ENCODE measurements at regions of chr11 and their contacts with region 1.

Region 1: GRCh38 chr11:68506908-68507307 is 46.4 kb downstream of the PPP6R3 start:
- DNase-seq: no peak
- ATAC-seq: no peak
- H3K4me3 Mint-ChIP-seq: no peak overlapping the region
- H3K27ac Mint-ChIP-seq: no peak overlapping the region
- H3K4me1 Mint-ChIP-seq: peaks cover 84% of the 10 kb centered on the region
- H3K27me3 Mint-ChIP-seq: no peaks in the 10 kb centered on the region
- CTCF ChIP-seq: no peak

Region 2: DNA sequence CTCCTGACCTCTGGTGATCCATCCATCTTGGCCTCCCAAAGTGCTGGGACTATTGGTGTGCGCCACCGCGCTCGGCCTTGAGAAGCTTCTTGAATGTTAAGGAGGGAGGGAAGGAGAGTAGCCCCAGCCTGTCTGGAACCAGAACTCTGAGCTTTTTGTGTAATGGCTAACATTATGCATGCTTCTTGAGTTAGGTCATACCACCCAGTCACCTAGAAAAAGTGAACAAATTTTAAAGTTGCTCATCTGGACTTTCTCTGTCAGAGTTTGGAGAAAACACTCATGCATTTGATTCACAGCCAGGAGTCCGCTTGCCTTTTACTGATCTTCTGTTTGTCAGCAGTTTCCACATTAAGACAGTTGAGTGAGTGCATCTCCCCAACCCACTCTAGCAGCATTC is 35.7 kb after region 1 on chr11:
- CTCF ChIA-PET with region 1: no interaction called
- POLR2A ChIA-PET with region 1: interaction called, 10 read pairs
- intact Hi-C with region 1: no loop called
- DNase-seq: no peak
- ATAC-seq: no peak
- H3K4me3 Mint-ChIP-seq: no peak overlapping the region
- H3K27ac Mint-ChIP-seq: no peak overlapping the region
- H3K4me1 Mint-ChIP-seq: peaks cover 13% of the 10 kb centered on the region
- H3K27me3 Mint-ChIP-seq: no peaks in the 10 kb centered on the region
- CTCF ChIP-seq: no peak

Measured in activated B cell treated with CpG ODN at 0.5 μM for 24 hours (primary cell).